Calu3 (cell line): ENCODE measurements at regions of chr7 and their contacts with region 1.

Region 1: DNA sequence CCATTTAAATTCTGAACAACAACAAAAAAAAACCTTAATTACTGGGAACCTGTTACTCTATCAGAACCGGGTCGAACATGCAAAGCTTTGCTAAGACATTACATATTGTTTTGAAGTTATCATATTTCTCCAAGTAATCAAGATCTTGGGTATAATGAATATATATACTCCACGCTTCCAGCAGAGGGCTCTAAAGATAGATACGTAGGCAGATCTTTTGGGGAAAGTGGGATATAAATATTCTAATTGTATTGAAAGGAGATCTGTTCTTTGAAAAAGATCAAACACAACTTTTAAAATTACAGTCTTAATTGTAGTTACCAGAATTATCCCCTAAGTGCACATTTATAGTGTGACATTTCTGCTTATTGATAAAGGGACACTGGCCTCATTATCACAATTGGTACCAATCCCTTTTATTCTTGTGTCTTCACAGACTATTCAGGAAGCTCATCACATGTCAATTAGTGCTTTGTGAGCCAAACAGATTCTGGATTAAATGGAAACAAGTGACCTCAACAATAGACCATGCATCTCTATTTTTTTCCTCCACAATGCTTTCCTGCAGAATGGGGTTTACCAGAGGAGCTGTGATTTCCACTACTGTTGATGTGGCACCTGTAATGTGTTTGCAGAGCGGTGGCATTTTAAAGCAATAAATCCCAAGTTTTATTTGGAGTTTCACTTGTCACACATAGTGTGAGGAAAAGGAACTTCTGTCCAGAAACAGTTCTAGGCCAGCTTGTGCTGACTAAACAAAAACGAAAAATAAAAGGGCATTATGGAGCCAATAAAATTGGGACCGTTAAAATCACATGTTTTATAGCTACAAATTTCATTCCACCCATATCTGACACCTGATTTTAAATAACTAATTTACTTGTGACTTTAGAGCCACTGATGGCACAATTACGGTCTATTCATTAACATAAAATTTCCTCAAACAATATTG is 122.4 kb downstream of the CTTNBP2 start:
- DNase-seq: no peak
- H3K4me3 Mint-ChIP-seq: no peak overlapping the region
- H3K27ac Mint-ChIP-seq: no peak overlapping the region
- H3K4me1 Mint-ChIP-seq: no peaks in the 10 kb centered on the region
- H3K27me3 Mint-ChIP-seq: no peaks in the 10 kb centered on the region
- CTCF ChIP-seq: peak; percentile 61

Region 2: GRCh38 chr7:117673839-117674238 is 77.0 kb before region 1 on chr7:
- CTCF ChIA-PET with region 1: no interaction called
- intact Hi-C with region 1: no loop called
- DNase-seq: no peak
- H3K4me3 Mint-ChIP-seq: no peak overlapping the region
- H3K27ac Mint-ChIP-seq: peak overlapping the region; percentile 30
- H3K4me1 Mint-ChIP-seq: peaks cover 37% of the 10 kb centered on the region
- H3K27me3 Mint-ChIP-seq: no peaks in the 10 kb centered on the region
- CTCF ChIP-seq: no peak

Region 3: DNA sequence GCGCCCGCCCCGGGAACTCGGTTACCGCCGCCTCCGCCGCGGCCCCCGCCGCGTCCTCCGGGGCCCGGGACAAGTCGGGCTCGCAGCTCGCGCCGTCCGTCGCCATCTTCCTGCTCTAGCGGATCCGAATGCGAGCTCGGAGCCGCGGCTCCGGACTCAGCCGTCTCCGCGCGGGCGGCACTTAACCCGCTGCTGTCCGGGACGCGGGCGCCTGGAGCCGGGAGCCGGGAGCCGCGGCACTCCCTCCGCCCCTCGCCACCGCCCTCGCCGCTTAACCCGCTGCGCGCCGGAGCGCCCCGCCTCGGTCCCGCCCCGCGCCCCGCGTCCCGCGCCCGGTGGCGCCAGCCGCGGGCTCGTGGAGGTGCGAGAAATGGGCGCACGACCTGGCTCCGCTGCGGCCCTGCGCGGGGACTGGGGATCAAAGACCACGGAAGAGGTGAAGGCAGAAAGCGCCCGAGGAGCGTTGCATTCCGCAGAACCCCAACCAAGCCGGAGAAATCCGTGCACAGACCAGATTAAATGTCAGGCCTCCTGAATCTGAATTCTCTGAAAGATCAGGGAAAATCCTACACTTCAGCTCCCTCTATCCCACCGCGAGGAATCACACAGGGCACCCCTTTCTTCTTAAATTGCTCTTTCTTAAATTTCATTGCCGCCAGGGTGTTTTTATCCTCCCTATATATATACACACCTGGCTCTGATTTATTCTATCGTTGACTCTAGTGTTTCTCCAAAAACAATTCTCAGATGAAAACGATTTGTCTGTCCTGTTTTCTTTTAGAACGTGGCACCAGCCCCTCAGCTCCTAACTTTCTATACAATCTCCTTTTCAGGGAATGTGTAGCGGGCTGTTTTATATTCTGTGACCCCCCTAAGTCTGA is 122.7 kb after region 1 on chr7 and contains the start of gene CTTNBP2:
- CTCF ChIA-PET with region 1: no interaction called
- intact Hi-C with region 1: loop called (anchors 2 kb)
- DNase-seq: peak; percentile 43
- H3K4me3 Mint-ChIP-seq: peak within 1 kb of the TSS; percentile 80
- H3K27ac Mint-ChIP-seq: peak within 1 kb of the TSS; percentile 52
- H3K4me1 Mint-ChIP-seq: peaks cover 17% of the 10 kb centered on the region
- H3K27me3 Mint-ChIP-seq: peaks cover 53% of the 10 kb centered on the region
- CTCF ChIP-seq: no peak
- total RNA-seq, gene CTTNBP2: 2.3 and 2.4 TPM in 2 replicates

Region 4: GRCh38 chr7:118104812-118105441 is 354.0 kb after region 1 on chr7:
- CTCF ChIA-PET with region 1: no interaction called
- intact Hi-C with region 1: loop called (anchors 1 kb)
- DNase-seq: no peak
- H3K4me3 Mint-ChIP-seq: no peak overlapping the region
- H3K27ac Mint-ChIP-seq: no peak overlapping the region
- H3K4me1 Mint-ChIP-seq: peaks cover 11% of the 10 kb centered on the region
- H3K27me3 Mint-ChIP-seq: no peaks in the 10 kb centered on the region
- CTCF ChIP-seq: no peak